ENCODE measurements at regions of chr18 and their contacts with region 1.

Region 1: GRCh38 chr18:23131693-23132319 is 3.5 kb upstream of the CABLES1 start:
- DNase-seq: peak in 1 of 2 donors; percentile 62
- H3K4me3 ChIP-seq: no peak overlapping the region
- H3K27ac ChIP-seq: no peak overlapping the region
- H3K4me1 ChIP-seq: peaks cover 0 to 20% (median 9%) of the 10 kb centered on the region in 4 donors
- H3K27me3 ChIP-seq: no peaks in the 10 kb centered on the region
- CTCF ChIP-seq: peak; percentile 80 to 82

Region 2: DNA sequence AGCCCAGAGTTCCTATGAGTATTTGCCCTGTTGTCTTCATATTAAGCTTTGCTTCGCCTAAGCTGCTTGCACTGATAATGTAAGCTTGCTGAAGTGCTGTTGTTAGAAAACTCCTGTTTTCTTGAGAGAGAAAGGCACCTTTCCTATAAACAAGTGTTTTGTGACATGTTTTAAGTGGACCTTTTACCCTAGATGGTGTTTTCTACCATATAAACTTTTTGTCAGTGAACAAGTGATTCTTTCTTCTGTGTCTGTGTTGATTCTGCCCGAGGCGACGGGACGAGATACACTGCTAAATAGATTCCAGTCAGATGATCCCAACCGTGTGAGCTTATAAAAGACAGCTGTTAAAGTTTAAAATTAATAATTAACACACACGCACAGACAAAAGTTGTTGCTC is 27.5 kb after region 1 on chr18:
- intact Hi-C with region 1: no loop called
- DNase-seq: no peak
- H3K4me3 ChIP-seq: no peak overlapping the region
- H3K27ac ChIP-seq: no peak overlapping the region
- H3K4me1 ChIP-seq: peaks cover 0 to 13% (median 6%) of the 10 kb centered on the region in 4 donors
- H3K27me3 ChIP-seq: no peaks in the 10 kb centered on the region
- CTCF ChIP-seq: no peak

Region 3: GRCh38 chr18:23220355-23220754 is 88.5 kb after region 1 on chr18:
- intact Hi-C with region 1: no loop called
- DNase-seq: no peak
- H3K4me3 ChIP-seq: no peak overlapping the region
- H3K27ac ChIP-seq: no peak overlapping the region
- H3K4me1 ChIP-seq: peaks cover 0 to 11% (median 8%) of the 10 kb centered on the region in 4 donors
- H3K27me3 ChIP-seq: no peaks in the 10 kb centered on the region
- CTCF ChIP-seq: no peak

Region 4: DNA sequence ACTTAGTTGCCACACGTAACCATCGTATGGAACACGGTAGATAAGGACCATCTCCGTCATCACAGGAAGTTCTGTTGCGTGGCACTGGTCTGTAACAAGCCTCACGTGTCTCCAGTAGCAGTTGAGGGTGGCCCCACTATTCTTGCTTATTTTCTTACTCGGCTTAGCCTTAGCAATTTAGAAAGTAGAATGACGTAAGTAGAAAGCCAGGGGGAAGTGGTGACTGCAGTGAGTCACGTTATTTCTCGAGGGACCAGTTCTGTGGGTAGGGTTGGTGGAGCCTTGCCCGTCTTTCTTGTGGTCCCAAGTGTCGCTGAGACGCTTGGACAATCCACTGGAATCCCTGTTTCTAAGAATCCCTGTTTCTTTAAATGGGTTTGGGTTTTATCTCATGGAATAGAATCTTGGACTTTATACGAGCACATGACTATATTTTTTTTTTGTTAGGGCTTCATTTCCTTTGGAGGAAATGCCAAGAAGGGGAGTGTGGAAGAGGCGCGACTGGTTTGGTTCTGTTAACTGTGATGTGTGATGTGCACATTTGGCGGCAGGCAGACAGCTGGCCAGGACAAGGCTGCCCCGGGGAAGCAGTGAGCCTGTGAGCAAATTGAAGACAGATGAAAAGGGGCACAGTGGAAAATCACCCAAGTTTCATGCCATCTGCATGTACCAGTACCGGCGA is 99.7 kb after region 1 on chr18:
- intact Hi-C with region 1: loop called (anchors 5 kb)
- DNase-seq: peak; percentile 91 to 95
- H3K4me3 ChIP-seq: no peak overlapping the region
- H3K27ac ChIP-seq: peak overlapping the region; percentile 89 to 90
- H3K4me1 ChIP-seq: peaks cover 0 to 56% (median 40%) of the 10 kb centered on the region in 4 donors
- H3K27me3 ChIP-seq: no peaks in the 10 kb centered on the region
- CTCF ChIP-seq: no peak

Region 5: GRCh38 chr18:23356915-23357601 is 225.3 kb after region 1 on chr18:
- intact Hi-C with region 1: loop called (anchors 5 kb)
- DNase-seq: no peak
- H3K4me3 ChIP-seq: no peak overlapping the region
- H3K27ac ChIP-seq: peak overlapping the region; percentile 72 to 78
- H3K4me1 ChIP-seq: peaks cover 0 to 49% (median 35%) of the 10 kb centered on the region in 4 donors
- H3K27me3 ChIP-seq: no peaks in the 10 kb centered on the region
- CTCF ChIP-seq: no peak

Region 6: DNA sequence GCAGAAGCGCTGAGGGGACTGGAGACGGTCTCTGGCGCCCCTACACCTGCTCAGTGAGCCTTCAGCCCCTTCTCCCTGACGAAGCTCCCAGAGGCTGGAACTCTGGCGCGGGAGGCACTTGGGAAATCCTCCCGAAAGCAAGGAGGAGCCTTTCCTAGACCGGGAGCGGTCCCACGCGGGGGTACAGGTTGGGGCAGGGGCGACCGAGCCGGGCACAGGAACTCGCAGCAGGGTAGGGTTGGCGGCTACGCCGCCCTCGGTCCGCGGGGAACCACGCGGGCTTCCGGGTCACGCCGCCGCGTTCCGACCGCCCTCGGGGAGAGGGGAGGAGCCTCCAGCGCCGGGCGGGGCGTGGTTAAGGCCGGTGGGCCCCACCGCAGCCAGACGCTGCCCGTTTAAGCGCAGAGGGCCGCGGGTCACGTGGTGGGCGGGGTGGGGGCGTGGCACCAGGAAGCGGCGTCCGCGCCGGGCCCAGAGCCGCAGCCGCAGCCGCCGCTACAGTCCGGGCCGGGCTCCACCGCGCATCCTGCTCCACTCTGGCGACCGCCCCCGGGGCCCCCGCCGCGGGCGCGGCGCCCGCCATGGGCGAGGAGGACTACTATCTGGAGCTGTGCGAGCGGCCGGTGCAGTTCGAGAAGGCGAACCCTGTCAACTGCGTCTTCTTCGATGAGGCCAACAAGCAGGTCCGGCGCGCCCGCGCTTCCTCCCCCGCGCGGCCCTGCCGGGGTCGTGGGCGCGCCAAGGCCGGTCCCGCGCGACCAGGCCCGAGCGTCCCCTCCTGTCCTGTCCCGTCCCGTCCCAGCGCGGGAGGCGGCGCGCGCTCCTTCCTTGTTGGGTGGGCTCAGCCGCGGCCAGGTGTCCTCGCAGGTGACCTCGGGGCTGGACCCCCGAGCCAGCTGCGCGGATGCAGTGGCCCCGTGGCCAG is 371.5 kb after region 1 on chr18 and contains the start of gene RMC1:
- intact Hi-C with region 1: loop called (anchors 10 kb)
- DNase-seq: peak; percentile 92 to 97
- H3K4me3 ChIP-seq: peak within 1 kb of the TSS; percentile 89 to 99
- H3K27ac ChIP-seq: peak within 1 kb of the TSS; percentile 90 to 93
- H3K4me1 ChIP-seq: peaks cover 0 to 41% (median 28%) of the 10 kb centered on the region in 4 donors
- H3K27me3 ChIP-seq: no peaks in the 10 kb centered on the region
- CTCF ChIP-seq: peak in 1 of 2 experiments; percentile 16